ENCODE measurements at regions of chr1 and their contacts with region 1.

Region 1: GRCh38 chr1:46173361-46173856 is 1.5 kb upstream of the TSPAN1 start:
- DNase-seq: peak in 1 of 3 donors; percentile 62
- ATAC-seq: no peak
- H3K4me3 ChIP-seq: no peak overlapping the region
- H3K27ac ChIP-seq: peak overlapping the region; percentile 77
- H3K4me1 ChIP-seq: peaks cover 31% of the 10 kb centered on the region
- H3K27me3 ChIP-seq: no peaks in the 10 kb centered on the region

Region 2: GRCh38 chr1:46132529-46133180 is 40.8 kb before region 1 on chr1 and contains the start of gene PIK3R3:
- intact Hi-C with region 1: loop called in 3 of 4 experiments (anchors 5 to 10 kb)
- DNase-seq: peak; percentile 98 to 99 (median 99)
- ATAC-seq: peak; percentile 99
- H3K4me3 ChIP-seq: peak within 1 kb of the TSS; percentile 99
- H3K27ac ChIP-seq: peak within 1 kb of the TSS; percentile 96
- H3K4me1 ChIP-seq: peaks cover 9% of the 10 kb centered on the region
- H3K27me3 ChIP-seq: no peaks in the 10 kb centered on the region
- total RNA-seq, gene PIK3R3: 30.5 to 49.8 (median 38.7) TPM